ENCODE measurements at regions of chr15 and their contacts with region 1.

Region 1: GRCh38 chr15:46502668-46503067 is 867.8 kb downstream of the SQOR start:
- DNase-seq: no peak
- H3K4me3 ChIP-seq: no peak overlapping the region
- H3K27ac ChIP-seq: no peak overlapping the region
- H3K4me1 ChIP-seq: no peaks in the 10 kb centered on the region
- H3K27me3 ChIP-seq: no peaks in the 10 kb centered on the region
- CTCF ChIP-seq: no peak
- POLR2A ChIP-seq: no peak

Region 2: GRCh38 chr15:46326173-46326572 is 176.5 kb before region 1 on chr15:
- intact Hi-C with region 1: no loop called
- DNase-seq: no peak
- H3K4me3 ChIP-seq: no peak overlapping the region
- H3K27ac ChIP-seq: no peak overlapping the region
- H3K4me1 ChIP-seq: no peaks in the 10 kb centered on the region
- H3K27me3 ChIP-seq: no peaks in the 10 kb centered on the region
- CTCF ChIP-seq: no peak
- POLR2A ChIP-seq: no peak

Region 3: GRCh38 chr15:46467041-46467440 is 35.6 kb before region 1 on chr15:
- intact Hi-C with region 1: loop called (anchors 2 kb)
- DNase-seq: no peak
- H3K4me3 ChIP-seq: no peak overlapping the region
- H3K27ac ChIP-seq: no peak overlapping the region
- H3K4me1 ChIP-seq: no peaks in the 10 kb centered on the region
- H3K27me3 ChIP-seq: no peaks in the 10 kb centered on the region
- CTCF ChIP-seq: no peak
- POLR2A ChIP-seq: no peak